CD8-positive, alpha-beta T cell (primary cell): ENCODE measurements at regions of chrX and their contacts with region 1.

Region 1: GRCh38 chrX:40153335-40154249 is 55.8 kb upstream of the BCOR start:
- DNase-seq: peak in 6 of 9 experiments; percentile 53 to 87 (median 68)
- ATAC-seq: peak; percentile 59
- H3K4me3 ChIP-seq: peak overlapping the region; percentile 45 to 47
- H3K4me3 Mint-ChIP-seq: peak overlapping the region; percentile 81
- H3K27ac ChIP-seq: no peak overlapping the region
- H3K27ac Mint-ChIP-seq: no peak overlapping the region
- H3K4me1 ChIP-seq: no peaks in the 10 kb centered on the region
- H3K4me1 Mint-ChIP-seq: peaks cover 21% of the 10 kb centered on the region
- H3K27me3 ChIP-seq: no peaks in the 10 kb centered on the region
- H3K27me3 Mint-ChIP-seq: no peaks in the 10 kb centered on the region
- CTCF ChIP-seq: no peak

Region 2: GRCh38 chrX:39730662-39731397 is 422.8 kb before region 1 on chrX:
- CTCF ChIA-PET with region 1: interaction called, 6 read pairs
- POLR2A ChIA-PET with region 1: no interaction called
- intact Hi-C with region 1: loop called in 1 of 2 experiments (anchors 10 kb)
- DNase-seq: peak in 8 of 9 experiments; percentile 32 to 71 (median 52)
- ATAC-seq: peak; percentile 74
- H3K4me3 ChIP-seq: no peak overlapping the region
- H3K4me3 Mint-ChIP-seq: peak overlapping the region; percentile 29
- H3K27ac ChIP-seq: no peak overlapping the region
- H3K27ac Mint-ChIP-seq: no peak overlapping the region
- H3K4me1 ChIP-seq: no peaks in the 10 kb centered on the region
- H3K4me1 Mint-ChIP-seq: peaks cover 5% of the 10 kb centered on the region
- H3K27me3 ChIP-seq: no peaks in the 10 kb centered on the region
- H3K27me3 Mint-ChIP-seq: no peaks in the 10 kb centered on the region
- CTCF ChIP-seq: peak; percentile 52

Region 3: DNA sequence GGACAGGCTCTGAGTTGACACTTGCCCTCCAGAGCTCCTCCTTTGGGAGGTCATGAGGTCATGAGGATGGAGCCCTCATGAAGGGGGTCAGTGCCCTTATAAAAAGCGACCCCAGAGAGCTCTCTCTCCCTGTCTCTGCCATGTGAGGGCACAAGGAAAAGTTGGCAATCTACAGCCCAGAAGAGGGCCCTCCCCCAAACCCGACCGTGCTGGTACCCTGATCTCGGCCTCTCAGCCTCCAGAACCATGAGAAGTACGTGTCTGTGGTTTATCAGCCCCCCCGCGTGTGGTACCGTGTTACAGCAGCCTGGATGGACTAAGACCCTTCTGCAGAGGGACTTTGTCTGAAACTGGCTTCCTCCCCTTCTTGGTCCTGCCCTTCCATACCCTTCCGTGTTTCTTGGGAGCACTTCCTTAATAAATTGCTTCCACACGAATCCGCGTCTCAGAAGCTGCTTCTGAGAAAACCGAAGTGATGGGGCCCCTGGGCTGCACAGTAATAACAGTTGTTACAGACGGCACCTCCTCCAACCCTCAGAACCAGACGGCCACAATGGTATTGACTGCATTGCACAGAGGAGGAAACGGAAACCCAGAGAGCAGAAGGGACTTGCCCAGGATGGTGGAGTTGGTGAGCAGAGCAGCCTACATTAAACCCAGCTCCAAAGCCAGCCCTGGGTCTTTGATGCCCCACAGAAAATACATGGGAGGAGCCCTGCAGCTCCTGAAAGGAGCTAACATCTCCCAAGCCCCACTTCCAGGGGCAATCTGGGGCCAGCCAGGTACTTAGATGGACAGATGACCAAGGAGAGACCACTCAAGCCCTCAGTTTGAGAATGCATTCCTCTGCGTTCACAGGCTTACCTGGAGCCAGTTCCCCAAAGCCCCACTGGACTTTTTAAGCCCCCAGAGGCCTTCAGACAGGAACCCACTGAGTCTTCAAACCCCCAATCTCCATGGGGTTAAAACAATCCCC is 298.5 kb before region 1 on chrX:
- CTCF ChIA-PET with region 1: no interaction called
- POLR2A ChIA-PET with region 1: no interaction called
- intact Hi-C with region 1: loop called in 1 of 2 experiments (anchors 5 kb)
- DNase-seq: peak; percentile 47 to 94 (median 71)
- ATAC-seq: peak; percentile 83
- H3K4me3 ChIP-seq: peak overlapping the region; percentile 40 to 42
- H3K4me3 Mint-ChIP-seq: peak overlapping the region; percentile 69
- H3K27ac ChIP-seq: peak overlapping the region; percentile 78 to 97
- H3K27ac Mint-ChIP-seq: peak overlapping the region; percentile 97
- H3K4me1 ChIP-seq: peaks cover 32% of the 10 kb centered on the region
- H3K4me1 Mint-ChIP-seq: peaks cover 58% of the 10 kb centered on the region
- H3K27me3 ChIP-seq: no peaks in the 10 kb centered on the region
- H3K27me3 Mint-ChIP-seq: no peaks in the 10 kb centered on the region
- CTCF ChIP-seq: no peak

Region 4: GRCh38 chrX:40108959-40109287 is 44.7 kb before region 1 on chrX:
- CTCF ChIA-PET with region 1: no interaction called
- POLR2A ChIA-PET with region 1: interaction called, 6 read pairs
- intact Hi-C with region 1: loop called (anchors 2 kb)
- DNase-seq: peak; percentile 26 to 85 (median 69)
- ATAC-seq: peak; percentile 57
- H3K4me3 ChIP-seq: peak overlapping the region; percentile 37 to 40
- H3K4me3 Mint-ChIP-seq: peak overlapping the region; percentile 64
- H3K27ac ChIP-seq: no peak overlapping the region
- H3K27ac Mint-ChIP-seq: no peak overlapping the region
- H3K4me1 ChIP-seq: peaks cover 15% of the 10 kb centered on the region
- H3K4me1 Mint-ChIP-seq: peaks cover 13% of the 10 kb centered on the region
- H3K27me3 ChIP-seq: no peaks in the 10 kb centered on the region
- H3K27me3 Mint-ChIP-seq: no peaks in the 10 kb centered on the region
- CTCF ChIP-seq: no peak

Region 5: DNA sequence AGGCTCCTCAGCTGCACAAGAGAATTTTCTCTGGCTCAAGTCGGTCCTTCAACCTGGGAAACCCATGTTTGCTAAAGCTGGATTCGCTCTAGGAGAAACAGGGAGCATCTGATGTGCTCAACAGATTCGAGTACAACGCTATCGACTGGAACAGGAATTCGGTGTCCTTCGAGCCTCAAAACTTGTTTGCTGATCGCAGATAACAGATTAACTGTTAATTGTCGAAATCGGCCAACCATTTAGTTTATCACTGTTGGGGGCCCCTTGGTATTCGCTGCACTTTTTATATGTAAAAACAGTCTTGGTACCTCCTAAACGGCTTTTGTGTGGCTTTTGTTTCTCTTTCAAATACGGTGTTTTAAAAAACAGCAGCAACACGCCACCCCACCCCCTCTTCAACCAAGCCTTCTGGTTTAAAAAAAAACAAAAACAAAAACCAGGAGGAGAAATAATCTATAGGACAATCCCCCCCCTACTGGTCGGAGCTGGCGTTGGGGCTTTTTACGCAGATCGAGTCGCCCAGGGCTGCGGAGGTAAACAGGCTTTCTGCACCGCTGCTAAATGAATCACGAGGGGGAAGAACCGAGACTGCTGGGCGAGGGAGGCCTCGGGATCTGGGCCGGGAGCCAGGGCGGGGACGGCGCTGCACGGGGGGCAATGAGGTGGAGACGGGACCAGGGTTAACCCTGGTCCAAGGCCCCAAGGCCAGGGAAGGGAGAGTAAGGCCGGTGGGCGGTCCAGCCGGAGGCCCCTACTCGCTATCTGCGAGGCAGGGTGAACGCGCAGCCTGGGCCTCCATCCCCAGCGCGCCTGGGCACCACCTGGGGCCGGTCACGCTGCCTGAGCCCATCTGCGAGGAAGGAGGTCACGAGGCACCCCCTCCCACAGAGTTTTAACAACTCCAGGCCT is 15.9 kb after region 1 on chrX:
- CTCF ChIA-PET with region 1: interaction called, 6 read pairs
- POLR2A ChIA-PET with region 1: interaction called, 18 read pairs
- intact Hi-C with region 1: loop called in 1 of 2 experiments (anchors 2 kb)
- DNase-seq: peak; percentile 62 to 91 (median 81)
- ATAC-seq: peak; percentile 66
- H3K4me3 ChIP-seq: peak overlapping the region; percentile 42 to 61
- H3K4me3 Mint-ChIP-seq: peak overlapping the region; percentile 85
- H3K27ac ChIP-seq: peak overlapping the region; percentile 83 to 95
- H3K27ac Mint-ChIP-seq: peak overlapping the region; percentile 96
- H3K4me1 ChIP-seq: peaks cover 49% of the 10 kb centered on the region
- H3K4me1 Mint-ChIP-seq: peaks cover 48% of the 10 kb centered on the region
- H3K27me3 ChIP-seq: no peaks in the 10 kb centered on the region
- H3K27me3 Mint-ChIP-seq: no peaks in the 10 kb centered on the region
- CTCF ChIP-seq: peak; percentile 22

Region 6: DNA sequence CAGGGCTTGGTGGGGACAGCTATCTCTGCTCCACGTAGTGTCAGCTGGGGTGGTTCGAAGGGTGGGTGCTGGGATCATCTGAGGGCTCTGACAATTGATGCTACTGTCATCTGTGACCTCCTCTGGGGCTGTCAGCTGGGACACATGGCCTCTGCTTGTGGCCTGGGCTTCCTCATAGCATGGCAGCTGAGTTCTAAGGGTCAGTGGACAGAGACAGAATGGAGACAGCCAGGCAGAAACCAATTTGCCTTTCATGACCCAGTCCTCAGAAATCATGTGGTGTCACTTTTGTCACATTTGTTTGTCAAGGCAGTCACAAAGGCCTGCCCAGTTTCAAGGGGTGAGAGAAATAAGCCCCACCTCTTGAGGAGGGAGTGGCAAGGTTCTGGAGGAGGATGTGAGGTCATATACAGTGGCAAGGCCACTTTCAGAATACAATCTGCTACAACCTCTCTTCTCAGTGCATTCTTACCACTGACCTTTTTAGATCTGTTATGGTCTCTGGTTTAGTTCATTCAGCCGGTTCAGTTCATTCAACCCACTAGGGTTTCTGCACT is 47.8 kb after region 1 on chrX:
- CTCF ChIA-PET with region 1: no interaction called
- POLR2A ChIA-PET with region 1: no interaction called
- intact Hi-C with region 1: no loop called
- DNase-seq: peak in 5 of 9 experiments; percentile 2 to 77 (median 41)
- ATAC-seq: peak; percentile 95
- H3K4me3 ChIP-seq: no peak overlapping the region
- H3K4me3 Mint-ChIP-seq: no peak overlapping the region
- H3K27ac ChIP-seq: peak overlapping the region in 1 of 2 experiments; percentile 66
- H3K27ac Mint-ChIP-seq: peak overlapping the region; percentile 82
- H3K4me1 ChIP-seq: peaks cover 12% of the 10 kb centered on the region
- H3K4me1 Mint-ChIP-seq: peaks cover 18% of the 10 kb centered on the region
- H3K27me3 ChIP-seq: no peaks in the 10 kb centered on the region
- H3K27me3 Mint-ChIP-seq: no peaks in the 10 kb centered on the region
- CTCF ChIP-seq: no peak

Region 7: DNA sequence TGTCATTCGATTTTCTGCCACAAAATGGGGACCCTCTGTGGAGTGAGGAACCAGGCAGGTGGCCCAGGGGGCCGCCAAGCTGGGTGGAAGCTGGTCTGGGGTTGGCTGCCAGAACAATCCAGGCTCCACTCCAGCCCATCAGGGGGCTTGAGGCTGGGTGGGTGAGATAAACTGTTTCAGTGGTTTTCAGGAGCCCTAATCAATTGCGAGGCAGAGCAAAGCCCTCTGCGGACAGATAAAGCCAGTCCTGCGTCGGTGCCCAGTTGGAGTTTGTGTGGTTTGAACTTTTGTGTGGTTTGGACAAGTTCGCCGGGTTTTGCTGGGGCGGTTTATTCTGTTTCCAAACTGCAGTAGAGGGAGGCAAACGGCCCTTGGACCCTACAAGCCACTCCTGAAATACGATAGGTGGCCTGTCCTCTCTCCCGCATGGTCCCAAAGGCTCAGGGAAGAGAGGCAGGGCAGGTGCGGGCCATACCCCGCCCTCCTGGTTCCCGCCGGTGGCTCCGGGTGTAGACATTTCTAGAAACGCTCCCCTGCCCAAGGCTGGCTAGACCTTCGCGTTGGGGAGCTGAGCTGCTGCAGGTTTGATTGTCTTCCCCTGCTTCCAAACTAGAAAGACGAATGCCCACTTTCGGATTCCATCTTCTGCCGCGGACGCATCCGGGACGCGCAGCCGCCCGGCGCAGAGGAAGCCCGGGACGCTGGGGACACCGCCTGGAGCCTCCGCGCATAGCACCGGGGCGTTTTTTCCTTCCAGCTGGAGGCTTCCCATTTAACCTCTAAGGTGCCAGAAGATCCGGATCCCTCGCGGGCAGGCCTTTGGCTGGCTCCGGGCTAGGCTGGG is 113.1 kb after region 1 on chrX:
- CTCF ChIA-PET with region 1: interaction called, 3 read pairs
- POLR2A ChIA-PET with region 1: no interaction called
- intact Hi-C with region 1: loop called in 1 of 2 experiments (anchors 10 kb)
- DNase-seq: peak; percentile 10 to 72 (median 46)
- ATAC-seq: peak; percentile 89
- H3K4me3 ChIP-seq: peak overlapping the region; percentile 57 to 65
- H3K4me3 Mint-ChIP-seq: peak overlapping the region; percentile 79
- H3K27ac ChIP-seq: no peak overlapping the region
- H3K27ac Mint-ChIP-seq: no peak overlapping the region
- H3K4me1 ChIP-seq: peaks cover 11% of the 10 kb centered on the region
- H3K4me1 Mint-ChIP-seq: peaks cover 6% of the 10 kb centered on the region
- H3K27me3 ChIP-seq: no peaks in the 10 kb centered on the region
- H3K27me3 Mint-ChIP-seq: no peaks in the 10 kb centered on the region
- CTCF ChIP-seq: peak; percentile 41